SK-N-SH (cell line): ENCODE measurements at regions of chr11 and their contacts with region 1.

Region 1: GRCh38 chr11:77101052-77101537 is 1.5 kb upstream of the OMP start:
- DNase-seq: peak; percentile 59
- H3K4me3 ChIP-seq: no peak overlapping the region
- H3K27ac ChIP-seq: no peak overlapping the region
- H3K4me1 ChIP-seq: peaks cover 0 to 10% of the 10 kb centered on the region in 2 experiments; a peak in 1 of 4 replicates
- H3K27me3 ChIP-seq: no peaks in the 10 kb centered on the region
- CTCF ChIP-seq: peak; percentile 67
- EP300 ChIP-seq: no peak
- RAD21 ChIP-seq: peak; percentile 35

Region 2: DNA sequence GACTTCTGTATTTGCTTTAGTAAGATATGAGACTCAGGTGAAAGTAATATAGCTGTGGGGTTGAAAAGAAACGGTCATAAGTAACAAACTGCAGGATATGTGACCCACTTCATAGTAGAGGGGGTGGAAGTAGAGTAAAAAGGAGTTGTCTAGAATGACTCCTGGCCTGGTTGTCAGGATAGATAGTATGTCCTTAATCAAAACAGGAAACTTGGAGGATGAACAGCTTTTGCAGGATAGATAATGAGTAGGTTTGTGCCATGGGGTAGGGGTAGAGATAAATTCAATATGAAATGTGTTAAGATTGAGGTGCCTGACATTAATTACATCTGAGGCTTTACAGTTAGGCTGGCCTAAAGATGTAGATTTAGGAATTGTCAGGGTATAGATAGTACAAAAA is 113.9 kb before region 1 on chr11:
- CTCF ChIA-PET with region 1: no interaction called
- POLR2A ChIA-PET with region 1: no interaction called
- DNase-seq: no peak
- H3K4me3 ChIP-seq: no peak overlapping the region
- H3K27ac ChIP-seq: no peak overlapping the region
- H3K4me1 ChIP-seq: no peaks in the 10 kb centered on the region
- H3K27me3 ChIP-seq: no peaks in the 10 kb centered on the region
- CTCF ChIP-seq: no peak
- EP300 ChIP-seq: no peak
- RAD21 ChIP-seq: no peak

Region 3: GRCh38 chr11:77113382-77114088 is 12.4 kb after region 1 on chr11:
- CTCF ChIA-PET with region 1: interaction called, 18 read pairs
- POLR2A ChIA-PET with region 1: no interaction called
- DNase-seq: peak; percentile 74
- H3K4me3 ChIP-seq: no peak overlapping the region; a peak in 1 of 4 replicates
- H3K27ac ChIP-seq: no peak overlapping the region
- H3K4me1 ChIP-seq: peaks cover 3 to 27% of the 10 kb centered on the region in 2 experiments; a peak in 3 of 4 replicates
- H3K27me3 ChIP-seq: no peaks in the 10 kb centered on the region
- CTCF ChIP-seq: peak; percentile 65
- EP300 ChIP-seq: no peak
- RAD21 ChIP-seq: peak; percentile 67